ENCODE measurements at regions of chr18 and their contacts with region 1.

Region 1: GRCh38 chr18:24930971-24931370 is 421.0 kb downstream of the ZNF521 start:
- DNase-seq: peak; percentile 75 to 81
- H3K4me3 ChIP-seq: no peak overlapping the region
- H3K4me3 Mint-ChIP-seq: peak overlapping the region; percentile 42
- H3K27ac Mint-ChIP-seq: peak overlapping the region; percentile 85
- H3K4me1 ChIP-seq: peaks cover 30% of the 10 kb centered on the region
- H3K4me1 Mint-ChIP-seq: peaks cover 30% of the 10 kb centered on the region
- H3K27me3 ChIP-seq: no peaks in the 10 kb centered on the region
- H3K27me3 Mint-ChIP-seq: no peaks in the 10 kb centered on the region
- CTCF ChIP-seq: no peak

Region 2: GRCh38 chr18:24878289-24878688 is 52.7 kb before region 1 on chr18:
- CTCF ChIA-PET with region 1: no interaction called
- POLR2A ChIA-PET with region 1: no interaction called
- intact Hi-C with region 1: loop called (anchors 2 kb)
- DNase-seq: peak in 1 of 2 experiments; percentile 18
- H3K4me3 ChIP-seq: no peak overlapping the region
- H3K4me3 Mint-ChIP-seq: no peak overlapping the region
- H3K27ac Mint-ChIP-seq: no peak overlapping the region
- H3K4me1 ChIP-seq: no peaks in the 10 kb centered on the region
- H3K4me1 Mint-ChIP-seq: no peaks in the 10 kb centered on the region
- H3K27me3 ChIP-seq: no peaks in the 10 kb centered on the region
- H3K27me3 Mint-ChIP-seq: no peaks in the 10 kb centered on the region
- CTCF ChIP-seq: no peak

Region 3: GRCh38 chr18:24987303-24988252 is 56.6 kb after region 1 on chr18:
- CTCF ChIA-PET with region 1: no interaction called
- POLR2A ChIA-PET with region 1: no interaction called
- intact Hi-C with region 1: no loop called
- DNase-seq: no peak
- H3K4me3 ChIP-seq: no peak overlapping the region
- H3K4me3 Mint-ChIP-seq: no peak overlapping the region
- H3K27ac Mint-ChIP-seq: no peak overlapping the region
- H3K4me1 ChIP-seq: no peaks in the 10 kb centered on the region
- H3K4me1 Mint-ChIP-seq: no peaks in the 10 kb centered on the region
- H3K27me3 ChIP-seq: no peaks in the 10 kb centered on the region
- H3K27me3 Mint-ChIP-seq: no peaks in the 10 kb centered on the region
- CTCF ChIP-seq: no peak

Region 4: DNA sequence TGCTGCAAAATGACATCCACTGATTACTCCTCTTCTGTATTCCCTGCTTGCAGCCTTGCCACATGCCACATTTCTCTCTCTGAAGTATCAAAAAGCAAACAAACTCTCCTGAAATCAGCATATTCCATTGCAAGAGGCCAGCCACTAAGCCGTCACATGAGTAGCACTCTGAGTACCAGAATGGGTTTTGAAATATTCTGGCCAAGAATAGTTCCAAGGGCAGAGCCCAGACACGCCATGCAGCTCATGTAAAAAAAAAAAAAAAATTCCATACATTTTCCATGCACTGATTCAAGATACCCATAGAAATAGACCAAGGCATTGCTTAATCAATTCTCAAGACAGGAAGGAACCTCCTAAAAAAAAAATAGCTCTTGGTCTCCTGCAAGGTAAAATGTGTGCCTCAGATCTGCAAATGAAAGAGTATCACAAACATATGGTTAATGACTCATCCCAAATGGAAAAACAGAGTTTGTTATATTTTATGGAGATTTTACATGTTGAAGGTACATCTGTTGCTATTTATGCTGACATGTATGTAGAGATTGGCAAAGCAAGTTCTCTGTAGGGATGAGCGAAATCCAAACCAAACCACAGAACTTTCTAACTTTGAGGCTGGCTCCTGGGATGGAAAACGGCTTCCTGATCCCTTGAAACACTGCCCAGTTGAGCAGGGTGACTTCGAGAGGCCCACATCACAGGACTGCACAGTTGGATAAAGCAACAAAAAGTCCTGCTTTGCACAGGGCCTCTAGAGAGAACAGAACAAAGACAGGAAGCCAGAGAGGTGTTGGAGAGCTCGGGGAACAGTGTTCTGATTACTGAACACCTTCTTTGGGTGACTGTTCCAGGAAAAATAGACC is 74.8 kb after region 1 on chr18:
- CTCF ChIA-PET with region 1: no interaction called
- POLR2A ChIA-PET with region 1: no interaction called
- intact Hi-C with region 1: loop called (anchors 5 kb)
- DNase-seq: peak in 1 of 2 experiments; percentile 4
- H3K4me3 ChIP-seq: no peak overlapping the region
- H3K4me3 Mint-ChIP-seq: no peak overlapping the region
- H3K27ac Mint-ChIP-seq: no peak overlapping the region
- H3K4me1 ChIP-seq: no peaks in the 10 kb centered on the region
- H3K4me1 Mint-ChIP-seq: peaks cover 6% of the 10 kb centered on the region
- H3K27me3 ChIP-seq: no peaks in the 10 kb centered on the region
- H3K27me3 Mint-ChIP-seq: no peaks in the 10 kb centered on the region
- CTCF ChIP-seq: no peak

Region 5: DNA sequence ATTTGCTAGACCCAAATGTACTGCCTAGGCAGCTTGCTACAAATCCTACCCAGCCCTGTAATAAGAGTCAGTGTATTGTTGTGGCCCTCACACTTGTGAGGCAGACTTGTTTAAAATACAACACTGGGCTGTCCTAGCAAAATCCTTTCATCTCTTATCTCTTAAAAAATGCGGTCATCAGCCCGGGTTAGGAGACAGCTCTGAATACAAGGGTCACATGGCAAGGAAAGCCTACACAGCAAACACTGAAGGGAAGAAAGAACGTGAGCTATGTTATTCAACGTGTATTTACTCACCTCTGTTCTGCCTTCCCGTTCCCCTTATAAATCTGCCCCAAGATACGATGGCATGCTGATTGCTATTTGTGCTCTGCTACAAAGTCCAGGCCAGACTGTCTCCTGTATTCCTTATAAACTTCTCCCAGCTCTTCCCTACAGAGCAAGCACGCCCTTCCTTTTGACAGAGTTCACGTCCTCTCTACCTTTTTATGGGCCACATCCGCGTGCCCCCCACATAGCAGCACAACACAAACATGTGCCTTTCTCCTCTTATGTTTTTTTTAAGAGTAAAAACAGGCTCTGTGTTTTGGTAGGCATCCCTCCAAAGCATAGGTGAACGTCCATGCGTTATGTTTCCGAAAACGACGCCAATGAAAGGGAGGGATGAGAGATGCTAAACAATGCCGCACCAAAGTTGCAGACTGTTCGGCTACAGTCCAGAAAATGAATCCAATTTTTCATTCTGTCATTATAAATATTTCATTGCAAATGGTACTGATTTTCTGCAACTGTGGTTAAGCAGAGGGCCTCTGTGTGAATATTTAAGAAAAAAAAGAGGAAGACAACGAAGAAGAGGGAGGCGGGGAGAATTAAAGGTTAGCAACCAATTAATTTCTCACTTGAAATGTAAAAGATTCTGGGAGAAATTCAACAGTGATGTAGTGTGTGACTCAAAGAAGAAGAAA is 146.3 kb after region 1 on chr18:
- CTCF ChIA-PET with region 1: no interaction called
- POLR2A ChIA-PET with region 1: no interaction called
- intact Hi-C with region 1: loop called (anchors 1 kb)
- DNase-seq: peak; percentile 70 to 75
- H3K4me3 ChIP-seq: no peak overlapping the region
- H3K4me3 Mint-ChIP-seq: peak overlapping the region; percentile 64
- H3K27ac Mint-ChIP-seq: peak overlapping the region; percentile 94
- H3K4me1 ChIP-seq: peaks cover 26% of the 10 kb centered on the region
- H3K4me1 Mint-ChIP-seq: peaks cover 13% of the 10 kb centered on the region
- H3K27me3 ChIP-seq: no peaks in the 10 kb centered on the region
- H3K27me3 Mint-ChIP-seq: no peaks in the 10 kb centered on the region
- CTCF ChIP-seq: no peak

Measured in Caco-2 (cell line).